GM10248 (cell line): ENCODE measurements at regions of chr9 and their contacts with region 1.

Region 1: DNA sequence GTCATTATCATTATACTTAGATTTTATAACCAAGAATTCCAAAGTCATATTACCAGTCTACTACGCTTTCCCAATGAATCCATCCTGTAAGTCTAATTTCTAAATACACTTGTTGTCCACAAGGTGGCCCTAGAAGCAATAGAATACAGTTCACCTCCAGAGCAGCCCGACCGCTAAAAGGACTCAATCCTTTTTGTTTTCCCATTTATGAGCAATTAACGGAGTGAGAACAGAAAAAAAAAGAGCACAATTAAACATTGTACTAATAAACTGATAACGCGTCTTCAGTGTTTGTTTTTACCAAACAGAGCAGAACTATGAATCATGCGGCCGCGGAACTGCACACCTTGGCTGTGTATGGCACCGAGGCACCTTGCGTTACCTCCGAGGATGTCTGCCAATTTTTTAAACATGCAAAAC is 160.7 kb upstream of the DAPK1 start:
- DNase-seq: peak; percentile 54
- CTCF ChIP-seq: peak; percentile 64

Region 2: DNA sequence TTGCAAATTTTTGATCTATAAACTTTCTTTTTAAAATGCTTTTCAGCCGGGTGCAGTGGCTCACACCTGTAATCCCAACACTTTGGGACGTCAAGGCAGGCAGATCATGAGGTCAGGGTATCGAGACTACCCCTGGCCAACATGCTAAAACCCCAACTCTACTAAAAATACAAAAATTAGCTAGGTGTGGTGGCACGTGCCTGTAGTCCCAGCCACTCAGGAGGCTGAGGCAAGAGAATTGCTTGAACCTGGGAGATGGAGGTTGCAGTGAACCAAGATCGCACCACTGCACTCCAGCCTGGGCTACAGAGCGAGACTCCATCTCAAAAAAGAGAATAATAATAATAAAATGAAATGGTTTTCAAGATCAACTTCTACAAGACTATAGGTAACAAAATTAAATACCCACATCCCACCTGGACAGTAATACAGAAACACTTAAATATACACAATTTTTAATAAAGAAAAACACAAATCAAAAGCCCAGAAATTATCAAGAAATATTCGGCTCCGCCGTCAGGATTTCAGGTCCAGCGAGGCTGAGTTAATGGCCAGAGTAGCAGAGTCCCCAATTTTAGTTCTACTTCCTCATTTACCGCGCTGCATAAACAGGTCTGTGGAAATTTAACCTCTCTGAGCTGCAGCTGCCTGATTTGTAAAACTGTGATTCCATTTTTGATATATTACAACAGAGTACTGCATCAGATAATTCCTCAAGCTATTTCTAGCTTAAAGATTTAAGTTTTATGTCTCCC is 986.7 kb before region 1 on chr9:
- CTCF ChIA-PET with region 1: no interaction called
- POLR2A ChIA-PET with region 1: no interaction called
- DNase-seq: peak; percentile 46
- CTCF ChIP-seq: no peak

Region 3: DNA sequence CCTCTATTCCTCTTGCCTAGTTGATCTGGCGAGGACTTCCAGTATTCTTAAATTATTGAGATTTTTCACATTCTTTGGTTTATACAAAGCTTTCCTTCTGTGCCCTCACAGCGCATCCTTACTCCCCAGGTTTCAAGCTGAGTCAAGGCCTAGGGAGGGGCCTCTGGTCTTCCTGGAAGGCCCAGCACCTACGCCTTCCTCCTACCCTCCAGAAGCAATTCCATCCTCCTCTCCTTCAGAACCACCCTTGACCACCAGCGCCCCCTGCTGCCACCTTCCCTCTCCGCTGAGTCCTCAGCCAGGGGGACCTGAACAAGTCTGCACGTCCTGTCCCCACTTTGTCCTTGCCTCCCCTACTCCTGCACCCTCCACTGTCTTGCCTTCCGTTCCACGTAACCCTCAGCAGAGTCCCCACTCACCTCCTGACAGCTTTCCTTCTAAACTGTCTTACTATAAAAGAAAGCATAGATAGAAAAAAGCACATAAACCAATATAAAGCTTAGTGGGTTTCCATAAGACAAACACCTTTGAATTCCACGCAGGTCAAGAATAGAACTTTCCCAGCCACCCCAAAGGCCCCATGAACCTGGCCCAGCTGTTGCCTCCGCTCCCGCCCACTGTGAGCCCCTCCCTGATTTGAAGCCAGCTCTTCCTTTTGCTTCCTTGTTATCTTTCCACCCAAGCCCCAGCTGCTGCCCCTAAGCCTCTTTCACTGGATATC is 326.0 kb after region 1 on chr9:
- CTCF ChIA-PET with region 1: interaction called, 16 read pairs
- POLR2A ChIA-PET with region 1: no interaction called
- DNase-seq: peak; percentile 76
- CTCF ChIP-seq: peak; percentile 65

Region 4: DNA sequence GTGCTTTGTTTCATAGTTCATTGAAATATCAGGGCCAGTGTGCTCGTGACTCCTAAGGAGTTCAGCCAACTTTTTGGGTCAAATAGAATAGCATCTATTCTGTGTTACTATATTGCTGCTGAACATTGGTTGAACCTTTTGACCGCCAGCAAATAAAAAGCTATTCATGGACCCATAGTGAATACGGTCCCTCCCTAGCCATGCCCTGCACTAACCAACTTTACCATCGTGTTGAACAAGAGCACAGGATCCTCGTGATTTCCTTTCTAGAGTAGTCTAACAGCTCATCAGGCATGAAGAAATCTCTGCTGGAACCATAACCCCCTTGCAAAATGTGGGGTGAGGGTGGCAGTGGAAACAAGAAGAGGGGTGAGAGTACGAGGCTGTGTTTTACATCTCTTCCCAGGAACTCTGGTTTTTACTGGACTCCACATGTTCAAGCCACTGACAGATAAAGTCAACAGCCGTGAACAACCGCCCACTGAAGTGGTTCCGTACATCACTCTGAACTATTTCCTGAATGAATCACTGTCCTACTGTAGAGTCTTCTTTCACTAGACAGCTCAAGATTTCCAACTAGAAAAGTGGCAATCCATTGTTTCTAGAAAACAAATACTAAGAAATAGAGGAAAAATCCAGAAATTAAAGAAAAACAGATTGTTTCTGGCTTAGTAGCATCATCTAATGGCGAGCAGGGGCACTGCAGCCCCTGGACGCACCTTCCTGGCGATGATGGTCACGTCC is 475.6 kb after region 1 on chr9:
- CTCF ChIA-PET with region 1: interaction called, 10 read pairs
- POLR2A ChIA-PET with region 1: no interaction called
- DNase-seq: peak; percentile 31
- CTCF ChIP-seq: peak; percentile 64